H1 (cell line): ENCODE measurements at regions of chr4 and their contacts with region 1.

Region 1: DNA sequence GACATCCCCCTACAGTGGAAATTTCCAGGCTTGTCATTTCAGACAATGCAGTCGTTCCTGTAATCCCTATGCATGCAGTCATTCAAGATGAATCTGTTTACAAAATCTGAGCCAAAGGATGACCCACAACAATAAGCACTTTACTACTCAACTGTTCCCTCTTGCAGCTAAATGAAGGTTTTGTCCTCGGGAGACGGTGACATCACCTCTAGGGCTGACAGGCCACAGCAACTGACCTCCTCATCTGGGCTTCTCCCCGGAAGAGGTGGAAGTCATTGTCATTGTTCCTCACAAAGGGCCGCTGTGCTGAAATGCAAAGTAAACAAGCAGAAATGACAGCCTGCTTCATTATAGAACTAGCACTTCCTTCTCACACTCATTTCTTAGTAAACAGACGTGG is 29.2 kb downstream of the CLRN2 start:
- DNase-seq: peak in 1 of 2 experiments; percentile 25
- H3K4me3 ChIP-seq: no peak overlapping the region
- H3K27ac ChIP-seq: no peak overlapping the region
- H3K4me1 ChIP-seq: peaks cover 0 to 4% (median 2%) of the 10 kb centered on the region in 4 experiments; a peak in 4 of 7 replicates
- H3K27me3 ChIP-seq: no peaks in the 10 kb centered on the region
- CTCF ChIP-seq: no peak
- EP300 ChIP-seq: no peak
- POLR2A ChIP-seq: no peak
- RAD21 ChIP-seq: no peak

Region 2: GRCh38 chr4:17562160-17562559 is 18.0 kb after region 1 on chr4:
- CTCF ChIA-PET with region 1: interaction called, 28 read pairs
- POLR2A ChIA-PET with region 1: no interaction called
- DNase-seq: no peak
- H3K4me3 ChIP-seq: no peak overlapping the region
- H3K27ac ChIP-seq: no peak overlapping the region
- H3K4me1 ChIP-seq: no peaks in the 10 kb centered on the region
- H3K27me3 ChIP-seq: no peaks in the 10 kb centered on the region
- CTCF ChIP-seq: peak; percentile 9 to 41 (median 37); a peak in 3 of 4 replicates
- EP300 ChIP-seq: no peak
- POLR2A ChIP-seq: no peak
- RAD21 ChIP-seq: peak; percentile 28 to 45

Region 3: GRCh38 chr4:17576932-17577665 is 32.9 kb after region 1 on chr4 and contains the start of gene LAP3:
- CTCF ChIA-PET with region 1: interaction called, 23 read pairs
- POLR2A ChIA-PET with region 1: interaction called, 6 read pairs
- DNase-seq: peak; percentile 89 to 100
- H3K4me3 ChIP-seq: peak within 1 kb of the TSS; percentile 60 to 85 (median 69)
- H3K27ac ChIP-seq: no peak within 1 kb of the TSS
- H3K4me1 ChIP-seq: peaks cover 0 to 5% (median 3%) of the 10 kb centered on the region in 4 experiments; a peak in 4 of 7 replicates
- H3K27me3 ChIP-seq: no peaks in the 10 kb centered on the region
- CTCF ChIP-seq: 0 out of 4 replicates have a peak, but pooled peaks of 1 of the 3 experiments have one; percentile 12
- EP300 ChIP-seq: no peak
- POLR2A ChIP-seq: peak; percentile 89 to 91
- RAD21 ChIP-seq: no peak
- total RNA-seq, gene LAP3: 50.9 TPM in 2 replicates

Region 4: DNA sequence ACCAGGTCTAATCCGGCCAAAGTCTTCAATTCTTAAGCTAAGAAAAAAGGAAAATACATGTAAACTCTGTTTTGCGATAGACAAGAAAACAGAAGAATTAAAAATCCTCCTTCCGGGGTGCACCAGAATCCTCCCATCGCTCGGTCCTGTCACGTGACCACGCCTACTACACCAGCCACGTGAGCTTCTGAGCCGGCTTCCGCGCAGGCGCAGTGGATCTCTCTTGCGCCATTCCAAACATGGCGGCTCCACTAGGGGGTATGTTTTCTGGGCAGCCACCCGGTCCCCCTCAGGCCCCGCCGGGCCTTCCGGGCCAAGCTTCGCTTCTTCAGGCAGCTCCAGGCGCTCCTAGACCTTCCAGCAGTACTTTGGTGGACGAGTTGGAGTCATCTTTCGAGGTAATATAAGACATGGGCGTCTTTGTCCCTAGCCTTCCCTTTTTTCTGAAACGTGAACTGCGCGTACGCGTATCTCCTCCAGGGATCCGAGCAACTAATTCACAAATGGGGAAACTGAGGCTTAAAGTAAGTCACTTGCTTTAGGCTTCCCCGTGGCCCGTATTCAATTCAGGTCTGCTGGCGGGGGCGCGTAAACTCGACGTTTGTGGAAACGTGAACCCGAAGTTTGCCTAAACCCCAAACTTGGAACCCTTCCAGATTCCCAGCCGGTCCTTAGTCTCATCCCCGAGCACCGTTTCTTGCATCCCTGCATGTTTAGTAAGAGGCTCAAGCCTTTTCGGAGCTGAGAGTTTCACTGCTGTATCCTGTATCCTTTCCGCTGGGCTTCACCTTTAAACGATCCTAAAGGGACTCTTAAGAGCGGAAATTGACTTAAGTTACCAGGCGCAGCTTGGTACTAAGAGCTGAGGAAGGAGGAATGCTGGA is 70.5 kb after region 1 on chr4 and contains the start of gene MED28:
- CTCF ChIA-PET with region 1: interaction called, 16 read pairs
- POLR2A ChIA-PET with region 1: no interaction called
- DNase-seq: peak; percentile 83 to 93
- H3K4me3 ChIP-seq: peak within 1 kb of the TSS; percentile 81 to 100 (median 100)
- H3K27ac ChIP-seq: peak within 1 kb of the TSS; percentile 95
- H3K4me1 ChIP-seq: peaks cover 0 to 4% (median 0%) of the 10 kb centered on the region in 4 experiments; a peak in 1 of 7 replicates
- H3K27me3 ChIP-seq: no peaks in the 10 kb centered on the region
- CTCF ChIP-seq: no peak
- EP300 ChIP-seq: no peak
- POLR2A ChIP-seq: peak; percentile 89 to 90
- RAD21 ChIP-seq: no peak; a peak in 1 of 4 replicates
- total RNA-seq, gene MED28: 87.1 and 101 TPM in 2 replicates